K562 (cell line): ENCODE measurements at regions of chr2 and their contacts with region 1.

Region 1: GRCh38 chr2:108637304-108637669 is 82.0 kb upstream of the RANBP2 start:
- DNase-seq: peak; percentile 77 to 89 (median 80)
- ATAC-seq: peak; percentile 85
- H3K4me3 ChIP-seq: no peak overlapping the region
- H3K27ac ChIP-seq: peak overlapping the region; percentile 76
- H3K4me1 ChIP-seq: peaks cover 21 to 51% of the 10 kb centered on the region in 2 experiments
- H3K27me3 ChIP-seq: no peaks in the 10 kb centered on the region
- CTCF ChIP-seq: no peak
- EP300 ChIP-seq: peak; percentile 72; the same call in 1 of the 2 replicates
- POLR2A ChIP-seq: no peak
- RAD21 ChIP-seq: no peak

Region 2: GRCh38 chr2:108533832-108534583 is 103.3 kb before region 1 on chr2 and contains the start of gene LIMS1:
- CTCF ChIA-PET with region 1: no interaction called
- POLR2A ChIA-PET with region 1: no interaction called
- in situ Hi-C with region 1: no loop called
- intact Hi-C with region 1: loop called (anchors 5 kb)
- DNase-seq: peak; percentile 88 to 97 (median 95)
- ATAC-seq: peak; percentile 90
- H3K4me3 ChIP-seq: peak within 1 kb of the TSS; percentile 86
- H3K27ac ChIP-seq: peak within 1 kb of the TSS; percentile 93
- H3K4me1 ChIP-seq: peaks cover 23 to 25% of the 10 kb centered on the region in 2 experiments
- H3K27me3 ChIP-seq: no peaks in the 10 kb centered on the region
- CTCF ChIP-seq: peak in 1 of 3 experiments; percentile 12; a peak in 1 of 6 replicates
- EP300 ChIP-seq: no peak
- POLR2A ChIP-seq: peak; percentile 96
- RAD21 ChIP-seq: no peak
- polyA plus RNA-seq, gene LIMS1: 52.8 to 81.0 TPM

Region 3: DNA sequence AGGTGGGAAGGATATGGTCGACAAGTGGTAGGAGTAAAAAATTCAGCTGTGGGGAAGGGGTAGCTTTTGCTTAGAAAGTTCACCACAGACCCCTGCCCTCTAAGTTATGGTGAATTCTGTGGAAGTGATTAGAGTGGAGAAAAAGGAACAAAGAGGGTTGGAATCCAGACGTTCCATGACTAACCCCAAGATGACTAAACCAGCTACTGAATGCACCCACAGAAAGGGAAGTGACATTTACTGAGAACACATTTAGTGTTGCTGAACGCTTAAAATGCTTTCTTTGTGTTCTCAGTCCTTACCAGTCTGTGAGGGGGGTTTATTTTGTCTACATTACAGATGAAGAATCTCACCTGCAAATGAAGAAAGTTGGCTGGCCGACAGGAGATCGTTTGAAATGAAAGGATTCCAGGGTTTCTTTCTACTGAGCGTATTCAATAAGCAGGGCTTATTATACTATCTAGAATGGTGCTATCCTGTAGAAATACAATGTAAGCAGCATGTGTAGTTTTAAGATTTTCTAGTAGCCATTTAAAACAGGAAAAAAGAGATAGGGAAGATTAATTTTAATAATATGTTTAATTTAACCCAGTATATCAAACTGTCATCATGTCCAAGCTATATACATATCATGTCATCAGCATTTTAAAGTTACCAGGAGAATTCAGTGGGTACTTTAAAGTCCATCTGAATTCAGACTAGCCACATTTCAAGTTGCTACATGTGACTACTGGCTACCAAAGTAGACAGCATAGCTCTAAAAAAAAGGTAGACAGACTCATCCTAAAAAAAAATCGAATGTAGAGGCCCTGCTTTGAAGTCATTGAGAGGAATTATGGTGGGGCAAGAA is 42.9 kb before region 1 on chr2:
- CTCF ChIA-PET with region 1: no interaction called
- POLR2A ChIA-PET with region 1: interaction called, 4 read pairs
- in situ Hi-C with region 1: no loop called
- intact Hi-C with region 1: loop called (anchors 5 kb)
- DNase-seq: peak in 1 of 4 experiments; percentile 64
- ATAC-seq: peak; percentile 24
- H3K4me3 ChIP-seq: no peak overlapping the region
- H3K27ac ChIP-seq: peak overlapping the region; percentile 94
- H3K4me1 ChIP-seq: peaks cover 12 to 55% of the 10 kb centered on the region in 2 experiments; a peak in 4 of 5 replicates
- H3K27me3 ChIP-seq: no peaks in the 10 kb centered on the region
- CTCF ChIP-seq: no peak
- EP300 ChIP-seq: peak; percentile 23; the same call in 1 of the 2 replicates
- POLR2A ChIP-seq: no peak
- RAD21 ChIP-seq: no peak; a peak in 1 of 4 replicates

Region 4: DNA sequence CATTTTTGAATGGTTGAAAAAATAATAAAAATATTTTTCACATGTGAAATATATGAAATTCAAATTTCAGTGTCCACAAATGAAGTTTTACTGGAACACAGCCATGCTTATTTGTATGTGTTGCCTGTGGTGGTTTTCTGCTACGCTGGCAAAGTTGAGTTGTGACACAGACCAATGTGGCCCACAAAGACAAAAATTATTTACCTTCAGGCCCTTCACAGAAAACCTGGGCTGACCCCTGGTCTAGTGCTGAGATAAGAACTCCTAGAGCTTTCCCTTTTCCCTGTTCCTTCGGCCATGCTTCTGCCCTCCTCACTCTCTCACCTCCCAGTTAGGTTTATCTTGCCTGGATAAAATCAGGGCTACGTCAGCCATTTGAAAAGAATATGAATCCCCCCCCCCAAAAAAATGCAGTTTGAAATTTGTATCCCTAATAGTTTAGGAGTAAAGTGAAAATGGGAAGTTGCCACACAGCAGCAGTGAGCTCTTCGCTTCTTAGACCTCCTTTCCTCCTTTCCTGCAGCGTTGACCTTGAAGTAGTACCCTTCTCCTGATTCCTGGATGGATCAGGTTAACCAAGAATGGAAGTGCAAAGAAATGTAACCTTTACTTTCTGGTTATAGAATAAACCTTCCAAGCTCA is 12.0 kb before region 1 on chr2:
- CTCF ChIA-PET with region 1: interaction called, 5 read pairs
- POLR2A ChIA-PET with region 1: interaction called, 20 read pairs
- in situ Hi-C with region 1: no loop called
- intact Hi-C with region 1: no loop called
- DNase-seq: peak in 1 of 4 experiments; percentile 45
- ATAC-seq: peak; percentile 11; the same call in 2 of the 3 replicates
- H3K4me3 ChIP-seq: no peak overlapping the region; the same call in 1 of the 2 replicates
- H3K27ac ChIP-seq: peak overlapping the region; percentile 64; the same call in 2 of the 3 replicates
- H3K4me1 ChIP-seq: peaks cover 8 to 42% of the 10 kb centered on the region in 2 experiments; a peak in 4 of 5 replicates
- H3K27me3 ChIP-seq: no peaks in the 10 kb centered on the region
- CTCF ChIP-seq: no peak
- EP300 ChIP-seq: no peak
- POLR2A ChIP-seq: no peak
- RAD21 ChIP-seq: no peak